Endothelial cell of umbilical vein (primary cell): ENCODE measurements at regions of chr17 and their contacts with region 1.

Region 1: DNA sequence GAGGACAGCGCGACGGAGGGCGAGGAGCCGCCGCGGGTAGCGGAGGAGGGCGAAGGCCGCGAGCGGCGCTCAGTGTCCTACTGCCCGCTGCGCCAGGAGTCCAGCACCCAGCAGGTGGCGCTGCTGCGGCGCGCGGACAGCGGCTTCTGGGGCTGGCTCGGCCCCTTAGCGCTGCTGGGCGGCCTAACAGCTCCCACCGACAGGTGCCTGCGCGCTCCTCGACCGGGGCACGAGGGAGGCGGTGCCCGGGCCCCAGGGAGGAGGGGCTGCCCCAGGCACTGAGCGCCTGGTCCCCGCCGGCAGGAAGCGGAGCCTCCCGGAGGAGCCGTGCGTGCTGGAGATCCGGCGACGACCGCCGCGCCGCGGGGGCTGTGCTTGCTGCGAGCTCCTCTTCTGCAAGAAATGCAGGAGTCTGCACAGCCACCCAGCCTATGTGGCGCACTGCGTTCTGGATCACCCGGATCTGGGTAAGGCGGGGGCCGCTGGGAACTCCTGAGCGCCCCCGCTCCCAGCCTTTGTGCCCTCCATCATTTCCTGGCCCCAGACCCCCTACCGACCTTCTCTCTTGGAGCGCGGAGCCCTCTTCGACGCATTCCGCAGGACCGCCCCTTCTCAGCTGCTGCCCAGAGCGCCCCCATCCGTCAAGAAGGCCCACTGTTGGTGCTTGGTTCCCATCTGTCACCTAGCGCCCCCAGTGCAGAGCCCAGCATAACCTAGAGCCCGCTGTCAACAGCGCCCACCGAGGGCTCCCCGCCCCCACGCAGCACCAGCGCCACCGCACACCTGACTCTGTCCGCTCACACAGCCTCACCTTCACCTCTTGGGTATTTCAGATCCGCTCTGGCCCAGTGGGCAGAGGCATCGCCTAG is 3.7 kb downstream of the C17orf50 start:
- DNase-seq: peak; percentile 90
- H3K4me3 ChIP-seq: peak overlapping the region; percentile 19 to 50 (median 36)
- H3K27ac ChIP-seq: no peak overlapping the region
- H3K4me1 ChIP-seq: peaks cover 7% of the 10 kb centered on the region
- H3K27me3 ChIP-seq: peaks cover 1 to 2% of the 10 kb centered on the region in 2 experiments
- CTCF ChIP-seq: peak; percentile 98 to 99
- POLR2A ChIP-seq: peak; percentile 49

Region 2: GRCh38 chr17:35726127-35726952 is 38.0 kb before region 1 on chr17:
- CTCF ChIA-PET with region 1: no interaction called
- POLR2A ChIA-PET with region 1: no interaction called
- dilution Hi-C with region 1: no loop called
- intact Hi-C with region 1: no loop called
- DNase-seq: no peak
- H3K4me3 ChIP-seq: no peak overlapping the region
- H3K27ac ChIP-seq: no peak overlapping the region
- H3K4me1 ChIP-seq: peaks cover 4% of the 10 kb centered on the region
- H3K27me3 ChIP-seq: no peaks in the 10 kb centered on the region
- CTCF ChIP-seq: no peak
- POLR2A ChIP-seq: no peak

Region 3: GRCh38 chr17:35774499-35774898 is 10.1 kb after region 1 on chr17:
- CTCF ChIA-PET with region 1: interaction called, 34 read pairs
- POLR2A ChIA-PET with region 1: no interaction called
- dilution Hi-C with region 1: no loop called
- intact Hi-C with region 1: loop called (anchors 1 kb)
- DNase-seq: peak; percentile 60
- H3K4me3 ChIP-seq: no peak overlapping the region
- H3K27ac ChIP-seq: no peak overlapping the region
- H3K4me1 ChIP-seq: peaks cover 5% of the 10 kb centered on the region
- H3K27me3 ChIP-seq: peaks cover 5 to 7% of the 10 kb centered on the region in 2 experiments
- CTCF ChIP-seq: no peak
- POLR2A ChIP-seq: no peak

Region 4: DNA sequence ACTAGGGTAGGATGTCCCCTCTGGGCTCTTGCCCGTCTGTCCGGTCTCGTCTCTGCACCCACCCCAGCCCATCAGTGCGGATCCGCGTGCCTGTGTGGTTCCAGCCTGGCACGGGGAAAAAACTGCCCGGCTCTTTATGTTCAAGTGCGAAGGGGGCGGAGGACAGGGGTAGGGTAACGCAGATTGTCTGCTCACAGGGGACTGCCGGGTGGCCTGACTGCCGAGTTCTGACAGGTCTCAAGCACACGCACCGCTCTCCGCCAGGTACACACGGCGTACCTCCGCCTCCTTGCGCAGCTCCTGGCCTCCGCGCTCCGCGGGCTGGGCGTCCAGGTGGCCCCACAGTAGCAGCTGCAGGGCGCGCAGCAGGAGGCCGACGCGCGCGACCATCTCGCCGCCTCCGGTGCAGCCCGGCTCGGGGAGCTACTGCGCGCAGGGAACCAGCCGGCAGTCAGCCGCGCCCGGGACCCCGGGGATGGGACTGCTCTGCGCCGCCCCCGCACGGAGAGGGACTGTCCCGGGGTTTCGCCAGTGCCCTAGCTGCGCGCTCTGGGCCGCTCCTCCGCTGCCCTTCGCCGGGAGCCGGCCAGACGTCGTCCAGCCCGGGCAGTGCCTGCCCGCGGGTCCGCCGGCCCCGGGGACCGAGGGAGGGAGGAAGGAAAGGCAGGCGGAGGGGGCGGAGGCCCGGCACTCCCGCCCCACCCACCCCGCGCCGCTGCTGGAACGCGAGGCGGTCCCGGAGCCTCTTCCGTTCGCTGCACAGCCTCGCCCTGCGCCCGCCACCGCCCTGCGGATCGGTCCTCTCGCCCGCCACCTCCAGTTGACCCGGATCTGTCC is 30.8 kb after region 1 on chr17 and contains the start of gene MMP28:
- CTCF ChIA-PET with region 1: interaction called, 68 read pairs
- POLR2A ChIA-PET with region 1: no interaction called
- dilution Hi-C with region 1: no loop called
- intact Hi-C with region 1: no loop called
- DNase-seq: peak; percentile 34
- H3K4me3 ChIP-seq: peak within 1 kb of the TSS in 2 of 3 experiments; percentile 3 to 46
- H3K27ac ChIP-seq: no peak within 1 kb of the TSS
- H3K4me1 ChIP-seq: peaks cover 11% of the 10 kb centered on the region
- H3K27me3 ChIP-seq: peaks cover 41 to 63% of the 10 kb centered on the region in 2 experiments
- CTCF ChIP-seq: no peak
- POLR2A ChIP-seq: no peak
- total RNA-seq, gene MMP28: 3.6 and 6.1 TPM in 2 replicates

Region 5: DNA sequence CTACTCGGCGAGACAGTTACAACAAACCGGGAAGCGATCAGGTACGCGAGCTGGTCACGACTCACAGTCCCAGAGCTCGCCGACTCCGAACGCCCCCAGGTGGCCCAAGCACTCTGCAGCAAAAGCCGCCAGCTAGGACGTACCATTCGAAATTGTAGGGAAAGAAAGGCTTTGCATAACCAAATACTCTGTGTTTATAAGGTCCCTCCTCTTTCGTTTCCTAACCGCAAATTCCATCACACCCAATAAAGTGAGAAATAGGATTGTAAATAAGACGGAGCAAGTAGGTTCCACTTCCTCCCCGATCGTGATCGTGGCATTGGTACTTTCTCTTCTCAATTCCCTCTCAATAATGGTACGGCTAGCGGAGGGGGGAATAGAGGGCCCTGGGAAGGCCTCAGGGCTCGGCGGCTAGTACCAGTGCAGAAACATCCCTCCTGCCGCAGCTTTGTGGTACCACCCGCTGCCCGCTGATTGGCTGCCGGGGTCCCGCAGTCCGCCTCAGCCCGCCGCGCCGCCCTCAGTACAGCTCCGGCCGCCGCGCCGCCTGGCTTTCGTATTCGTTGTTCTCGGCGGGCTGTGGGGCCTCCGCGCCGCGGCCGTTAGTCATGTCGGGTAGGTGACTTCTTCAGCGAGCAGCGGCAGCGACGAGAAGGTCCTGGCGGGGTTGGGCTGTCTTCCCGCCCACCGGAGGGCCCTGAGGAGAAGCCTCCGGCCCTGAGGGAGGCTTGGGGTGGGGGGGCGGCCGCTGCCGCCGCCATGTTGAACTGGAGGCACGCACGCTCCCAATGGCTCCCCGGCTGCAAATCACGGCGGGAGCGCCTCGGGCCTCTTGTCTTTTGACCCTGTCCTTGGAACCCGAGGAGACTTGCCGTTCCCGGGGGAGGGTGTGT is 44.9 kb after region 1 on chr17 and contains the start of gene TAF15:
- CTCF ChIA-PET with region 1: interaction called, 453 read pairs
- POLR2A ChIA-PET with region 1: interaction called, 39 read pairs
- dilution Hi-C with region 1: no loop called
- intact Hi-C with region 1: loop called (anchors 1 kb)
- DNase-seq: peak; percentile 98
- H3K4me3 ChIP-seq: peak within 1 kb of the TSS; percentile 56 to 96 (median 81)
- H3K27ac ChIP-seq: peak within 1 kb of the TSS; percentile 90
- H3K4me1 ChIP-seq: peaks cover 35% of the 10 kb centered on the region
- H3K27me3 ChIP-seq: no peaks in the 10 kb centered on the region
- CTCF ChIP-seq: peak; percentile 77 to 85
- POLR2A ChIP-seq: peak; percentile 98
- total RNA-seq, gene TAF15: 244 and 247 TPM in 2 replicates